ENCODE measurements at regions of chr2 and their contacts with region 1.

Region 1: DNA sequence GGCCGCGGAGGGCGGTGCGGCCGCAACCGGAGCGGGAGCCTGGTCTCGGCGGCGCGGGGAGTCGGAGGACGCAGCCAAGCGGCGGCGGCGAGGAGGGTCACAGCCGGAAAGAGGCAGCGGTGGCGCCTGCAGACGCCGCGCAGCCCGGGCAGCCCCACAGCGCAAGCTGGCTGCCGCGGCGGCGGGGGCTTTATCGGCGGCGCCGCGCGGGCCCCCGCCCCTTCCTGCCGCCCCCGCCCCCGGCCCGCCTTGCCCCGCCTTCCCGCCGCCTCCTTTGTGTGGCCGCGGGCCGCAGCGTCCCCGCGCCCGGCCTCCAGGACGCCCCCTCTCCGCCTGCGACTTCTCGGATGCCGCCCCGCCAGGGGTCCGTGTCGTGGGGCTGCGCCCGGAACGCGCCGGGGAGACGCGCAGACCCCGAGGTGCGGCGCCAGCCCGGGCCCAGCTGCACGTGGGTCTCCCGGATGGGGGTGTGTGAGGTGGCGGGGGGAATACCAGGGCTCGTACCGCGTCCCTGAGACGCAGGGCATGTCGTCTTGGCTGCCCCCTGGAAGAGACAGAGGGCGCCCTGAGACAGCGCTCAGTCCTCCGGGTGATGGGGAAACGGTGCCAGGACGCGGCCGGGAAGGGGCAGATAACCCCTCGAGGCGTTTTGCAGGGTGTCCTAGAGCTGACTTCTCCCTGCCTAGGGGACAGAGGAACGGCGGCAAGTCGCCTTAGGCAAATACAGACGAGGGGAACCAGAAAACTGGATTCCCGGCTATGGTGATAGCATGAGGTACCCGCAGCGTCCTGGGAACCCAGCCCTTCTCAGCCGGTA is at the start of gene SERPINE2:
- DNase-seq: peak; percentile 59
- H3K4me3 ChIP-seq: peak within 1 kb of the TSS; percentile 75
- H3K27ac ChIP-seq: no peak within 1 kb of the TSS
- H3K4me1 ChIP-seq: peaks cover 7% of the 10 kb centered on the region
- H3K27me3 ChIP-seq: no peaks in the 10 kb centered on the region
- CTCF ChIP-seq: peak; percentile 24
- total RNA-seq, gene SERPINE2: 13.6 to 19.2 TPM

Region 2: DNA sequence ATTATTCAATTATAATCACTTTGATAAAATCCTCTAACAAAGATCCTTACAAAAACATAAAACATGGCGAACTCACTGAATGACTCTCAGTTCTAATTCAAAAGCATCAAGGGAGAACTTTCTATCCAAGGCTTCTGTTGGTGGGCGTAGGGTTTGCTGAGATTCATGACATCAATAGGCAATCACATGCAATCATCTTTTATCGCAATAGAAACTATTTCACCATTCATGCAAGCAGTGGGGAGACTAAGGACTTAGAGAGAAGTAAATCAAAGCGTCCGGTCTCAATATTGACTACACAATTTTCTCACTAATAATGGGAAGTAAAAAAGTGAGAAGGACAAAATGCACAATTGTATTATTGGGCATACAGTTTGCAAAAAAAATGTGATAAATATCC is 605.9 kb before region 1 on chr2:
- intact Hi-C with region 1: no loop called
- DNase-seq: no peak
- H3K4me3 ChIP-seq: no peak overlapping the region
- H3K27ac ChIP-seq: no peak overlapping the region
- H3K4me1 ChIP-seq: no peaks in the 10 kb centered on the region
- H3K27me3 ChIP-seq: no peaks in the 10 kb centered on the region
- CTCF ChIP-seq: no peak

Region 3: DNA sequence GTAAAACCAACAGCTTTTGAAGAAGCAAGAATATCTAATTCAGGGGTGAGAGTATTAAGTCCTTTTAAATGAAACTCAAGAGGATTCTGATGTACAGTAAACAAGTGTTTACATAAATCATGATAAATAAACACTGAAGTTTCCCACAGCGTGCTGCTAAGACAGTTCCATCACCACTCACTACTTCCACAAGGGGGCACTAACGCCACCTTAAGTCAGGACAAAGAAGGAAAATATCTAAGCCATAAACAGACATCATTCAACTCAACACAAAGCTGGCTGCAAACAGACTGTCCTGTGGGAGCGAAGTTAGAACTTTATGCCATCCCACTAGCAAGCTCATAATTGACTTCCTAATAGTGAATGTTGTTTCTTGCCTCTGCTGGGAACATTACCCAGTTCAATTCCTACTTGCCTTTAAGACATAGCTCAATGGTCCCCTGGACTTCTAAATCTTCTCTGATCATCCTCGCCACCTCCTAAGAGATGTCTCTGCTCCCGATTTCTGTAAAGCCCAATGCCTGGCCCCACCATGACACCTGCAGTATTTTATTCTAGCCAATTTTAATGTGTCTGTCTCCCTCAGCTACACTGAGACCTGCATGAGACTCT is 45.6 kb before region 1 on chr2:
- intact Hi-C with region 1: loop called (anchors 2 kb)
- DNase-seq: peak; percentile 78
- H3K4me3 ChIP-seq: no peak overlapping the region
- H3K27ac ChIP-seq: no peak overlapping the region
- H3K4me1 ChIP-seq: no peaks in the 10 kb centered on the region
- H3K27me3 ChIP-seq: no peaks in the 10 kb centered on the region
- CTCF ChIP-seq: peak; percentile 75

Region 4: GRCh38 chr2:224333726-224334482 is 294.6 kb after region 1 on chr2:
- intact Hi-C with region 1: no loop called
- DNase-seq: no peak
- H3K4me3 ChIP-seq: no peak overlapping the region
- H3K27ac ChIP-seq: no peak overlapping the region
- H3K4me1 ChIP-seq: no peaks in the 10 kb centered on the region
- H3K27me3 ChIP-seq: no peaks in the 10 kb centered on the region
- CTCF ChIP-seq: no peak

Measured in colonic mucosa (tissue), 4 donors.